Activated naive CD4-positive, alpha-beta T cell treated with anti-CD3 and anti-CD28 coated beads for 36 hours (primary cell): ENCODE measurements at regions of chr1 and their contacts with region 1.

Region 1: GRCh38 chr1:30779294-30780071 is 21.9 kb upstream of the LAPTM5 start:
- DNase-seq: peak; percentile 96
- H3K4me3 Mint-ChIP-seq: no peak overlapping the region
- H3K27ac Mint-ChIP-seq: no peak overlapping the region
- H3K4me1 Mint-ChIP-seq: peaks cover 11% of the 10 kb centered on the region
- H3K27me3 Mint-ChIP-seq: no peaks in the 10 kb centered on the region

Region 2: GRCh38 chr1:29864431-29865022 is 915.0 kb before region 1 on chr1:
- CTCF ChIA-PET with region 1: no interaction called
- intact Hi-C with region 1: no loop called
- DNase-seq: no peak
- H3K4me3 Mint-ChIP-seq: no peak overlapping the region
- H3K27ac Mint-ChIP-seq: no peak overlapping the region
- H3K4me1 Mint-ChIP-seq: no peaks in the 10 kb centered on the region
- H3K27me3 Mint-ChIP-seq: peaks cover 8% of the 10 kb centered on the region

Region 3: DNA sequence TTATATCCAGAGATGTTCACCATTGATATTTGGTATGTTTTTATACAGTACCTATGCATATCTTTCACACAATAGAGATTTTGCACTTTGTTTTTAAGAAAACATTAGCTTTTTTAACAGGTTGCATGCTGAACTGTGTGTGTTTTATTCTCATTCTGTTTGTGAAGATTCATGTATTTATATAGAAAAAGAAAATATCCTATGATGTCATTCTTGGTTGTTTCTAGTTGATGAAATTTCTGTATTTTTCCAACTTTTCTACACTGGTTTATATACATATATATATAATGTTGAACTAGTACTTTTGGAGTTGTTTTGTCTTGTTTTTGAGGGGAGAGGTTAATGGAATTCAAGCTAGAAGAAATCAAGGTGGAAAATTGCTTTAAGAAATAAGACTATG is 199.9 kb before region 1 on chr1:
- CTCF ChIA-PET with region 1: no interaction called
- intact Hi-C with region 1: no loop called
- DNase-seq: no peak
- H3K4me3 Mint-ChIP-seq: no peak overlapping the region
- H3K27ac Mint-ChIP-seq: no peak overlapping the region
- H3K4me1 Mint-ChIP-seq: no peaks in the 10 kb centered on the region
- H3K27me3 Mint-ChIP-seq: peaks cover 26% of the 10 kb centered on the region

Region 4: DNA sequence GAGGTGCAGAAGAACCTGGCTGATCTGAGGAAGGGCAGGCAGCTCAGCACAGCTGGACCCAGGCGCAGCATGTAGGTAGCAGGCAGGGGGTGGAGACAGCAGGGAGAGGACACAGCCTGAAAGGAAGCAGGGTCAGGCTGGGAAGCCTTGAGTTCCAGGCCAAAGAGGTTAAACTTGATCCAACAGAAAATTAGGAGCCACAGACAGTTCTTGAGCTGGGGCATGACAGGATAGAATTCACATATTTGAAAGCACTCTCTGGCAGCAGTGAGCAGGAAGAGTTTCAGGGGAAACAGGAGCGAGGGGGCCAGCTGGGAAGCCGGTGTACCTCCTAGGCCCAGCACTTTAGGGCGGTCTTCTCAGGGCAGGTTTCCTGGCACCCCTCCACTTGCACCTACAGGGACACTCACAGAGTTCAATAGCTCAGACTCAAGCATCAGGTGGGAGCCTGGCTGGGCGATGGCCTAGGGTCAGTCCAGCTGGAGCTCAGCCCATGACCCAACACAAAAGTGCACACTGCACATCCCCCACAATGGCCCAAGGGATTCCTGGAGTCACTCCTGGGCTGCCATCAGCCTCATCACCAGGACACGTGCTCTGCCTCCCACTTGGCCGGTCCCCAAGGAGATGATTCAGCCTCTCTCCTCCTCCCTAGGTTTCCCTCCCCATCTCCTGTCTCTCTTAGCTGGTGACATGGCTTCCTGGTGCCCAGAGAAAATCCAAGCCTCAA is 78.8 kb before region 1 on chr1:
- CTCF ChIA-PET with region 1: no interaction called
- intact Hi-C with region 1: no loop called
- DNase-seq: no peak
- H3K4me3 Mint-ChIP-seq: no peak overlapping the region
- H3K27ac Mint-ChIP-seq: no peak overlapping the region
- H3K4me1 Mint-ChIP-seq: no peaks in the 10 kb centered on the region
- H3K27me3 Mint-ChIP-seq: no peaks in the 10 kb centered on the region

Region 5: GRCh38 chr1:30732277-30732996 is 47.0 kb before region 1 on chr1:
- CTCF ChIA-PET with region 1: interaction called, 355 read pairs
- intact Hi-C with region 1: no loop called
- DNase-seq: no peak
- H3K4me3 Mint-ChIP-seq: no peak overlapping the region
- H3K27ac Mint-ChIP-seq: peak overlapping the region; percentile 79
- H3K4me1 Mint-ChIP-seq: peaks cover 10% of the 10 kb centered on the region
- H3K27me3 Mint-ChIP-seq: no peaks in the 10 kb centered on the region

Region 6: DNA sequence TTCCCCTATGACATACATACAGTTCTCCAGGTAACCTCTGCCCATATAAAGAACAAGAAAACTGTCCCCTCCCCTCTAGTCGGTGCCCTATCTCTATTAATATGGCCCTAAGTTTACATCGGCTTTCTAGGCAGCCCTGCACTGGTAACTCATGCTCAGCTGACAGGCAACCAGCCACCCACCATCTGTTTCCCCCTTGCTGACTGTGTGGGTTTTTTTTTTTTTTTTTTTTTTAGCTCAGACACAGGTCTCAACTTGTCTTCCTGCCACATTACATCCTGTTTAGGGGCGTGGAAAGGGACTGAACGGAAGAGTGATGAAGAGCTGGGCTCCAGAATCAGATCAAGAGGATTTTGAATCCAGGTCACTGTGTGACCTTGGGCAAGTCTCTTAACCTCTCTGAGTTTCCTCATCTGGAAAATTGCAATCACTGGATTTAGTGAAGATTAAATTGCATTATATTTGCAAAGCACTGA is 35.9 kb before region 1 on chr1:
- CTCF ChIA-PET with region 1: interaction called, 25 read pairs
- intact Hi-C with region 1: loop called (anchors 1 kb)
- DNase-seq: peak; percentile 86
- H3K4me3 Mint-ChIP-seq: peak overlapping the region; percentile 59
- H3K27ac Mint-ChIP-seq: peak overlapping the region; percentile 100
- H3K4me1 Mint-ChIP-seq: peaks cover 89% of the 10 kb centered on the region
- H3K27me3 Mint-ChIP-seq: no peaks in the 10 kb centered on the region

Region 7: GRCh38 chr1:30756545-30757195 is 22.8 kb before region 1 on chr1:
- CTCF ChIA-PET with region 1: interaction called, 46 read pairs
- intact Hi-C with region 1: loop called (anchors 1 kb)
- DNase-seq: peak; percentile 91
- H3K4me3 Mint-ChIP-seq: peak overlapping the region; percentile 98
- H3K27ac Mint-ChIP-seq: peak overlapping the region; percentile 100
- H3K4me1 Mint-ChIP-seq: peaks cover 76% of the 10 kb centered on the region
- H3K27me3 Mint-ChIP-seq: no peaks in the 10 kb centered on the region

Region 8: DNA sequence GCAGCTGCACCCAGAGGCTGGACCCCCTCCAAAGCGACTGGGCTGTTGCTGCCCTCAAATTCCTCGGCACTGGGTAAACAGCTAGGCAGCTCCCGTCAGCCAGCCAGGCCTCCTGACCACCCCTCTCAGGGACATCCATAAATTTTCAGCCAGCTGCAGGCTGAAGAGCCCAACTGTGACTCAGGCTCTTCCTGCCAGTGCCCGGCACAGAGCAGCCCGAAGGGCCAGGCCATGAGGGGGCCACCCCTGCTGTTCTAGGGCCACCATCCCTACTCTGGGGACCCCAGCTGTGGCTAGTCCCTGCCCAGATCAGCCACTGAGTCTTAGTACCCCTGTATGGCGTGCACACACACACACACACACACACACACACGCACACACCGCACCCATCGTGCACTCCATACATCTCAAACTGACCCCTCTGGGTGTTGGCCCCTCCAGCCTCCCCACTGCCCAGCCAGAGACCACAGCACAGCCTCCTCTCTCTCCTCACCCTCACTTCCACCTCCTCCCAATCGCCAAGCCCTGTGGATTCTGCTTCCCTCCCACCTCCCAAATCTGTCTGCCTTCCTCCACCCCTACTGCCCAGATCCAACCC is 15.7 kb before region 1 on chr1:
- CTCF ChIA-PET with region 1: interaction called, 46 read pairs
- intact Hi-C with region 1: no loop called
- DNase-seq: no peak
- H3K4me3 Mint-ChIP-seq: no peak overlapping the region
- H3K27ac Mint-ChIP-seq: peak overlapping the region; percentile 82
- H3K4me1 Mint-ChIP-seq: peaks cover 72% of the 10 kb centered on the region
- H3K27me3 Mint-ChIP-seq: no peaks in the 10 kb centered on the region

Region 9: DNA sequence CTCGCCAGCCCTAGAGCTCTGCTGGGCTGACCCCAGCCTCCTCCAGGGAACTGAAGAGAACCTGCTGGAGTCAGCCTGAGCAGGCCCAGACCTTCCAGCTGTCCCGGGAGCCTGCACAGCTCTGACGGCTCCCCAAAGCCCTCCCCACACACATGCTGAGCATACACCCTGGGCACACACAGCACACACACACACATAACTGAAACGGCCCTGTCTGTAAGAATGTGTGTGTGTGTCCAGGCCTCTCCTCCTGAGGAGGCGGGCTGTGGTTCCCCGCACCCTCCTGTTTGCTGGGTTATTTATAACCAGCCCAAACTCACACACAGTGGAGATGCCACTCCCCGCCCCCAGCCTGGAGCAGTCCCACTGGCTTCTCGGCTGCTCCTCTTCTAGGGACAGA is 108.9 kb after region 1 on chr1:
- CTCF ChIA-PET with region 1: no interaction called
- intact Hi-C with region 1: no loop called
- DNase-seq: no peak
- H3K4me3 Mint-ChIP-seq: no peak overlapping the region
- H3K27ac Mint-ChIP-seq: no peak overlapping the region
- H3K4me1 Mint-ChIP-seq: no peaks in the 10 kb centered on the region
- H3K27me3 Mint-ChIP-seq: peaks cover 3% of the 10 kb centered on the region

Region 10: DNA sequence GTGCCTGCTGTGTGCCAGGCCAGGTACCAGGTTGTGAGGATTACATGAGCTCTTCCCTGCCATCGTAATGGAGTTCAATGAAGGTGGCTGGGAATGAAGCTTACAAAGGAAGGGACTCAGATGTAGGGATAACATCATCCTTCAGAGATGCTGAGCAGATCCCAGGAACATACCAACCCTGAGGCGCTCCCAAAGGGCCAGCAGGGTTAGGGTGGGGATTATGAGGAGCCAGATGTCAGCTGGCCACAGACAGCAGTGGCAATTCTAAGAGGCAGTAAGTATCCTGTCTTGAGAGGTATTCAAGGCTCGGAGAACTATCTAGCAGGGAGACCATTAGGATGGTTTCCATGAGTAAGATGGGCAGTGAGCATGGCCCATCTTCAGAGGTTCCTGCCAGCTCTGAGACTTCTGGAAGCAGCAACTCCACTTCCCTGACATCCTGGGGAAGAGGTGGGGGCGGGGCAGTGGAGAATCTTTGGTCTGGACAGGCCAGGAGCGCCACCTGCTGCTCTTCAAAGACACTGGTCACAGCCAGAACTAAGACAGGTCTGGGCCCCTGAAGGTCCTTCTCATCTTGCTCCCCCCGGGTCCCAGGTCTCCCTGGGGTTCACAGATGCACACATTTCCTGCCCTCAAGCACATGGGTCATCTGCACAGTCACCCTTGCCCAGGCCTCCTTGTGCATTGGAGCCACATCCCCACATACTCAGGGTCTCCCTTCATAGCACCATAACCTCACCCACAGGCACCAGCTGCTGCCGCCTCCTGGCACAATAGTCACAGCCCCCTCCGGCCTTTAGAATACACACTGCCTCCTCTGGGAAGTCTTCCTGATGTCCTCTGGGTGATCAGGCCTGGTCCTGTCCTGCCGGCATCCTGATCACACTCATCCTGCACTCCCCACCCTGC is 131.8 kb after region 1 on chr1:
- CTCF ChIA-PET with region 1: interaction called, 24 read pairs
- intact Hi-C with region 1: loop called (anchors 1 kb)
- DNase-seq: peak; percentile 76
- H3K4me3 Mint-ChIP-seq: no peak overlapping the region
- H3K27ac Mint-ChIP-seq: no peak overlapping the region
- H3K4me1 Mint-ChIP-seq: peaks cover 12% of the 10 kb centered on the region
- H3K27me3 Mint-ChIP-seq: peaks cover 29% of the 10 kb centered on the region

Region 11: DNA sequence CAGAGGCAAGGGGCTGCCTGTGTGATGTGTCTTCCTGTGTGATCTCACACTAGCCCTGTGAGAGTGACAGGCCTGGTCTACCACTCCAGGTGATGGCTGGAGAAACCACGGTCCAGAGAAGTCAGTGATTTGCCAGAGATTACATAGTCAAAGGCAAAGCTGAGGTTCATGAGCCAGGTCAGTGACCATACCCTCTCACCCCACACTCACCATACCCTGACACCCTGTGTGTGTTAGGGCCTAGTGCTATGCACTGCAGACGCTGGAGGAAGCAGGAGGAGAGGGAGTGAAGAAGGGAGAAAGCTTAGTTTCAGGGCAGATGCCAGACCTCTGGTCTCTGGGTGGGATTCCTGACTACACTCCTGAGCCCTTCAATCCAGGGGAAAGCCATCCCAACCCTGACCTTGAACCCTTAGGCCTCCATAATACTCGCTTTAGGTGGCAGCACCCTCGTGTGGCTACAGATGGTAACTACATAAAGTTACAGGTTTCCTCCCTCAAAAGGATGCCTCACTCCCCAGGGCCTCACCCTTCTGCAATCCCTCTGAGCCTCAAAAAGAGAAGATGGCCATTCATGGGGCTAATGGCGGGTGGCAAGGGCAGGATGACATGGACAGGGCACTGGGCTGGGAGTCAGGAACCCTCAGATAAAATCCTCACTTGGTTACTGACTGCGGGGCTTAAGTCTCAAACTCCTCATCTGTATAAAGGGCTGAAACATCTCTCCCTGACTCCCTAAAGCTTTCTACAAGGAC is 149.8 kb after region 1 on chr1:
- CTCF ChIA-PET with region 1: interaction called, 10 read pairs
- intact Hi-C with region 1: loop called (anchors 1 kb)
- DNase-seq: peak; percentile 74
- H3K4me3 Mint-ChIP-seq: no peak overlapping the region
- H3K27ac Mint-ChIP-seq: no peak overlapping the region
- H3K4me1 Mint-ChIP-seq: no peaks in the 10 kb centered on the region
- H3K27me3 Mint-ChIP-seq: no peaks in the 10 kb centered on the region